CD4-positive, alpha-beta T cell (primary cell): ENCODE measurements at regions of chr4 and their contacts with region 1.

Region 1: GRCh38 chr4:101282076-101282844 is 65.1 kb downstream of the PPP3CA start:
- DNase-seq: peak in 4 of 14 experiments; percentile 30 to 65 (median 50)
- ATAC-seq: peak; percentile 66
- H3K4me3 ChIP-seq: no peak overlapping the region
- H3K4me3 Mint-ChIP-seq: no peak overlapping the region
- H3K27ac ChIP-seq: no peak overlapping the region
- H3K27ac Mint-ChIP-seq: no peak overlapping the region
- H3K4me1 ChIP-seq: peaks cover 11% of the 10 kb centered on the region
- H3K4me1 Mint-ChIP-seq: peaks cover 74% of the 10 kb centered on the region
- H3K27me3 ChIP-seq: no peaks in the 10 kb centered on the region
- H3K27me3 Mint-ChIP-seq: no peaks in the 10 kb centered on the region
- CTCF ChIP-seq: no peak

Region 2: GRCh38 chr4:101294597-101294996 is 12.3 kb after region 1 on chr4:
- CTCF ChIA-PET with region 1: no interaction called
- POLR2A ChIA-PET with region 1: no interaction called
- intact Hi-C with region 1: no loop called
- DNase-seq: no peak
- ATAC-seq: no peak
- H3K4me3 ChIP-seq: no peak overlapping the region
- H3K4me3 Mint-ChIP-seq: no peak overlapping the region
- H3K27ac ChIP-seq: no peak overlapping the region
- H3K27ac Mint-ChIP-seq: no peak overlapping the region
- H3K4me1 ChIP-seq: no peaks in the 10 kb centered on the region
- H3K4me1 Mint-ChIP-seq: peaks cover 39% of the 10 kb centered on the region
- H3K27me3 ChIP-seq: no peaks in the 10 kb centered on the region
- H3K27me3 Mint-ChIP-seq: no peaks in the 10 kb centered on the region
- CTCF ChIP-seq: no peak

Region 3: GRCh38 chr4:101321481-101322042 is 39.3 kb after region 1 on chr4:
- CTCF ChIA-PET with region 1: no interaction called
- POLR2A ChIA-PET with region 1: interaction called, 3 read pairs
- intact Hi-C with region 1: loop called (anchors 5 kb)
- DNase-seq: no peak
- ATAC-seq: no peak
- H3K4me3 ChIP-seq: no peak overlapping the region
- H3K4me3 Mint-ChIP-seq: no peak overlapping the region
- H3K27ac ChIP-seq: no peak overlapping the region
- H3K27ac Mint-ChIP-seq: no peak overlapping the region
- H3K4me1 ChIP-seq: peaks cover 6% of the 10 kb centered on the region
- H3K4me1 Mint-ChIP-seq: peaks cover 39% of the 10 kb centered on the region
- H3K27me3 ChIP-seq: no peaks in the 10 kb centered on the region
- H3K27me3 Mint-ChIP-seq: peaks cover 8% of the 10 kb centered on the region
- CTCF ChIP-seq: no peak

Region 4: DNA sequence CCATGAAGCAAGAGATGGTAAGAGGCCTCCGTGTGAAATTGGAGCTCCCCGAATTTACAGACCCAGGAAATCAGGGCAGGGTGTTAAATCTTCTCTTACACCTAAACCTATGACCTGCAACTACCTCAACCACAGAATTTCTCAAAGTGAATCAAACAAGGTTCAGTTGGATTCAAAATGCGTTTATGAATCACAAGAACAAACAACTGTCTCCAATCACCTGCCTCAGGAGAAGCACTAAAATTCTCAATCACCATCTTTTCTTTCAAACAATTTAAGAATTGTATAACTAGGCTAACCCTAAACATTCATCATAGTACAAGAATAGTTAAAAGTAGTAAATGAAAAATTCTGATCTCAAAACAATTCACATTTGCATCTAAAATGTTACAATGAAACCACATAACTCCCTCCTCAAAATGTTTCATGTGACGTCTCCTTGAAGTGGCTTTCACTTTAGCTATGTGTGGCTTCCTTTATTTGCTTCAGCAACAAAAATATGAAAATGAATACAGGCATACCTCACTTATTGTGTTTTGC is 45.9 kb after region 1 on chr4:
- CTCF ChIA-PET with region 1: no interaction called
- POLR2A ChIA-PET with region 1: interaction called, 3 read pairs
- intact Hi-C with region 1: loop called (anchors 5 kb)
- DNase-seq: peak in 4 of 14 experiments; percentile 24 to 80 (median 72)
- ATAC-seq: peak; percentile 87
- H3K4me3 ChIP-seq: peak overlapping the region; percentile 15
- H3K4me3 Mint-ChIP-seq: peak overlapping the region; percentile 23
- H3K27ac ChIP-seq: peak overlapping the region in 1 of 2 donors; percentile 18
- H3K27ac Mint-ChIP-seq: peak overlapping the region; percentile 76
- H3K4me1 ChIP-seq: peaks cover 19% of the 10 kb centered on the region
- H3K4me1 Mint-ChIP-seq: peaks cover 69% of the 10 kb centered on the region
- H3K27me3 ChIP-seq: no peaks in the 10 kb centered on the region
- H3K27me3 Mint-ChIP-seq: peaks cover 10% of the 10 kb centered on the region
- CTCF ChIP-seq: no peak